ENCODE measurements at regions of chr22 and their contacts with region 1.

Region 1: GRCh38 chr22:21735200-21736076 is at the start of gene YPEL1:
- DNase-seq: peak; percentile 98
- ATAC-seq: peak; percentile 96 to 98 (median 97)
- H3K4me3 ChIP-seq: peak within 1 kb of the TSS; percentile 74
- H3K27ac ChIP-seq: peak within 1 kb of the TSS; percentile 92
- H3K4me1 ChIP-seq: peaks cover 20% of the 10 kb centered on the region
- H3K27me3 ChIP-seq: no peaks in the 10 kb centered on the region
- CTCF ChIP-seq: no peak
- total RNA-seq, gene YPEL1: 2.9 to 21.9 (median 10.3) TPM

Region 2: GRCh38 chr22:21778705-21779363 is 43.4 kb after region 1 on chr22:
- intact Hi-C with region 1: loop called in 1 of 2 experiments (anchors 10 kb)
- DNase-seq: no peak
- ATAC-seq: no peak
- H3K4me3 ChIP-seq: no peak overlapping the region
- H3K27ac ChIP-seq: no peak overlapping the region
- H3K4me1 ChIP-seq: peaks cover 6% of the 10 kb centered on the region
- H3K27me3 ChIP-seq: no peaks in the 10 kb centered on the region
- CTCF ChIP-seq: no peak

Measured in psoas muscle (tissue), 8 donors.